Panc1 (cell line): ENCODE measurements at regions of chr2 and their contacts with region 1.

Region 1: GRCh38 chr2:219160186-219161017 is at the start of gene NHEJ1:
- DNase-seq: peak; percentile 75
- ATAC-seq: peak; percentile 97
- H3K4me3 ChIP-seq: peak within 1 kb of the TSS; percentile 61 to 77
- H3K27ac ChIP-seq: peak within 1 kb of the TSS; percentile 84
- H3K4me1 ChIP-seq: peaks cover 5% of the 10 kb centered on the region
- H3K27me3 ChIP-seq: no peaks in the 10 kb centered on the region
- CTCF ChIP-seq: peak; percentile 98
- total RNA-seq, gene NHEJ1: 18.2 TPM

Region 2: GRCh38 chr2:219218732-219219701 is 58.6 kb after region 1 on chr2 and contains the start of gene ABCB6:
- CTCF ChIA-PET with region 1: no interaction called
- POLR2A ChIA-PET with region 1: no interaction called
- in situ Hi-C with region 1: no loop called
- intact Hi-C with region 1: loop called (anchors 10 kb)
- DNase-seq: peak; percentile 52
- ATAC-seq: peak; percentile 83
- H3K4me3 ChIP-seq: peak within 1 kb of the TSS; percentile 59 to 67
- H3K27ac ChIP-seq: peak within 1 kb of the TSS; percentile 77
- H3K4me1 ChIP-seq: peaks cover 10% of the 10 kb centered on the region
- H3K27me3 ChIP-seq: no peaks in the 10 kb centered on the region
- CTCF ChIP-seq: no peak
- total RNA-seq, gene ABCB6: 19.0 TPM